ENCODE measurements at regions of chr9 and their contacts with region 1.

Region 1: GRCh38 chr9:115164511-115164974 is 46.6 kb upstream of the TNC start:
- DNase-seq: no peak
- H3K4me3 ChIP-seq: no peak overlapping the region
- H3K27ac ChIP-seq: no peak overlapping the region
- H3K4me1 ChIP-seq: no peaks in the 10 kb centered on the region
- H3K27me3 ChIP-seq: no peaks in the 10 kb centered on the region
- CTCF ChIP-seq: no peak

Region 2: GRCh38 chr9:115234094-115234493 is 69.6 kb after region 1 on chr9:
- intact Hi-C with region 1: no loop called
- DNase-seq: no peak
- H3K4me3 ChIP-seq: no peak overlapping the region
- H3K27ac ChIP-seq: no peak overlapping the region
- H3K4me1 ChIP-seq: no peaks in the 10 kb centered on the region
- H3K27me3 ChIP-seq: no peaks in the 10 kb centered on the region
- CTCF ChIP-seq: no peak

Region 3: GRCh38 chr9:115250621-115251032 is 86.1 kb after region 1 on chr9:
- intact Hi-C with region 1: no loop called
- DNase-seq: no peak
- H3K4me3 ChIP-seq: no peak overlapping the region
- H3K27ac ChIP-seq: no peak overlapping the region
- H3K4me1 ChIP-seq: no peaks in the 10 kb centered on the region
- H3K27me3 ChIP-seq: no peaks in the 10 kb centered on the region
- CTCF ChIP-seq: no peak

Region 4: GRCh38 chr9:115524453-115525059 is 360.0 kb after region 1 on chr9:
- intact Hi-C with region 1: loop called (anchors 10 kb)
- DNase-seq: peak; percentile 40
- H3K4me3 ChIP-seq: no peak overlapping the region
- H3K27ac ChIP-seq: no peak overlapping the region
- H3K4me1 ChIP-seq: no peaks in the 10 kb centered on the region
- H3K27me3 ChIP-seq: no peaks in the 10 kb centered on the region
- CTCF ChIP-seq: peak; percentile 47